H1 (cell line): ENCODE measurements at regions of chr11 and their contacts with region 1.

Region 1: GRCh38 chr11:12043959-12044819 is 35.8 kb upstream of the DKK3 start:
- DNase-seq: peak; percentile 27 to 87
- H3K4me3 ChIP-seq: no peak overlapping the region
- H3K27ac ChIP-seq: no peak overlapping the region
- H3K4me1 ChIP-seq: no peaks in the 10 kb centered on the region
- H3K27me3 ChIP-seq: no peaks in the 10 kb centered on the region; a peak in 2 of 7 replicates
- CTCF ChIP-seq: peak; percentile 89 to 93 (median 91)
- EP300 ChIP-seq: no peak
- POLR2A ChIP-seq: no peak
- RAD21 ChIP-seq: peak; percentile 95 to 96

Region 2: DNA sequence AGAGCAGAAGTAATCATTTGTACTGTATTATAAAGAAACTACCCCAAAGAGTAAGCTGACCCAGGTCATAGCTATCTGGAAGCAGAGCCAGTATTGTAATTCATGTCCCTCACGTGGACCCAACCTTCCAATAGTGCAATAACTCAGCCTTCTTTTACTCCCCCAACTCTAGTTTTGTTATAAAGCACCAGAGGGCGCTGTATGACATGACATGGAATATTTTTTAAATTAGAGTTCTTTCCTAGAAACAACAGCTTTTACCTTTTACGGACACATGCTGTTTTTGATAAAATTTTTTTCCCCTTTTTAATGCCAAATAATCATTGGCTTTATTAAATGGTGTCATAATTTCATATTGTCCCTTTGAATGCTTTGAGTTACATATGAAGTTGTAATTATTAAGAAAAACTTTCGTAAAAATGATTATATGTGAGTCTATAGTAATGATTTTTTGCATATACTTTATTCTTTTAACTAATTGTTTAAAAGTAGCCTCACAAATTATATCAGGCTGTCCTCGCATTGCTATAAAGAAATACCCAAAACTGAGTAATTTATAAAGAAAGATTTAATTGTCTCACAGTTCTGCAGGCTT is 112.6 kb before region 1 on chr11:
- CTCF ChIA-PET with region 1: interaction called, 42 read pairs
- POLR2A ChIA-PET with region 1: no interaction called
- DNase-seq: no peak
- H3K4me3 ChIP-seq: no peak overlapping the region
- H3K27ac ChIP-seq: no peak overlapping the region
- H3K4me1 ChIP-seq: no peaks in the 10 kb centered on the region
- H3K27me3 ChIP-seq: no peaks in the 10 kb centered on the region
- CTCF ChIP-seq: peak in 2 of 3 experiments; percentile 56 to 57; a peak in 2 of 4 replicates
- EP300 ChIP-seq: no peak
- POLR2A ChIP-seq: no peak
- RAD21 ChIP-seq: peak; percentile 72 to 74

Region 3: DNA sequence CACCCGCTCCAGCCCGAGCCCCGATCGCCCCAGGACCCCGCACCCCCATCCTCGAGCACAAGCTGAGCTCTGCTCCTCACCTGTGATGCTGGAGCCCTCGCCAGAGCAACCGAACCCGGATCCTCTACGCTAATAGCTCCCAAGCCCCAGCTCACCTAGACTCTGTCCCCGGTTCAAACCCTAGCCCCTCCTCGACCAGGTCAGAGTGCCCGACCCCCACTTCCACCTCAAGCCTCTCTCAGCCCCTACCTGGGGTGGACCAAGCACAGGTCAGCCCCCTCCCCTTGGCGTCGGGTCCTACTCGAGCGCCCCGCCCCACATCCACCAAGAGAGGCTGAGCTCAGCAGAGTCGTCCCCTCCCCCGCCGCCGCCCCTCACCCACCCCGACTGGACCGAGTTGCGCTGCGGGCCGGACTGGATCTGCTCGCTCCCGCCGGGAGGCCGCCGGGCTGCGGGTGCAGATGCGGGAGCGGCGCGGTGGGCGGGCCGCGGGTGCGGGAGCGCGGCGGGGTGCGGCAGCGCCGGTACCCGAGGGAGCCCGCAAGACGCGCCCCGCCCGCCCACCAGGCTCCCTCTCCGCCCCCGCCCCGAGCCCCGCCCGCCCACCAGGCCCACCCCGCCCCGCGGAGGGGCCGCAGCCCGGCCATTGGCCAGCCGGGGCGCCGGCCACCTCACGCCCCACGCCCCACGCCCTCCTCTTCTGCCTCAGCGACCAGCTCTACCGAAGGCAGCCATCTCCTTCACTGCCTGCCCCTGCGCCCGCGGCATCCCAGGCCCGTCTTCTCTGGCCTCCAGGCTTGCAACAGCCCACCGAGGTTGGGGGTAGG is 35.2 kb before region 1 on chr11:
- CTCF ChIA-PET with region 1: interaction called, 11 read pairs
- POLR2A ChIA-PET with region 1: interaction called, 6 read pairs
- DNase-seq: peak in 1 of 2 experiments; percentile 88
- H3K4me3 ChIP-seq: peak overlapping the region; percentile 70 to 80 (median 72)
- H3K27ac ChIP-seq: no peak overlapping the region
- H3K4me1 ChIP-seq: peaks cover 0 to 19% (median 5%) of the 10 kb centered on the region in 4 experiments; a peak in 6 of 7 replicates
- H3K27me3 ChIP-seq: peaks cover 0 to 13% (median 10%) of the 10 kb centered on the region in 4 experiments; a peak in 4 of 7 replicates
- CTCF ChIP-seq: no peak
- EP300 ChIP-seq: no peak
- POLR2A ChIP-seq: no peak
- RAD21 ChIP-seq: 0 out of 4 replicates have a peak, but pooled peaks of 1 of the 2 experiments have one; percentile 4

Region 4: GRCh38 chr11:12087075-12088004 is 43.2 kb after region 1 on chr11:
- CTCF ChIA-PET with region 1: interaction called, 12 read pairs
- POLR2A ChIA-PET with region 1: no interaction called
- DNase-seq: no peak
- H3K4me3 ChIP-seq: no peak overlapping the region
- H3K27ac ChIP-seq: no peak overlapping the region
- H3K4me1 ChIP-seq: peaks cover under 1 to 6% (median 6%) of the 10 kb centered on the region in 4 experiments
- H3K27me3 ChIP-seq: no peaks in the 10 kb centered on the region
- CTCF ChIP-seq: peak in 1 of 3 experiments; percentile 7; a peak in 1 of 4 replicates
- EP300 ChIP-seq: no peak
- POLR2A ChIP-seq: no peak
- RAD21 ChIP-seq: no peak

Region 5: GRCh38 chr11:12281571-12282478 is 237.6 kb after region 1 on chr11:
- CTCF ChIA-PET with region 1: interaction called, 403 read pairs
- POLR2A ChIA-PET with region 1: no interaction called
- DNase-seq: peak; percentile 57 to 94
- H3K4me3 ChIP-seq: no peak overlapping the region
- H3K27ac ChIP-seq: no peak overlapping the region
- H3K4me1 ChIP-seq: peaks cover 0 to 6% (median 0%) of the 10 kb centered on the region in 4 experiments; a peak in 1 of 7 replicates
- H3K27me3 ChIP-seq: no peaks in the 10 kb centered on the region
- CTCF ChIP-seq: peak; percentile 94 to 95 (median 94)
- EP300 ChIP-seq: no peak
- POLR2A ChIP-seq: no peak
- RAD21 ChIP-seq: peak; percentile 100